K562 (cell line): ENCODE measurements at regions of chr6 and their contacts with region 1.

Region 1: GRCh38 chr6:36423101-36423824 is 19.4 kb downstream of the PXT1 start:
- DNase-seq: peak; percentile 99 to 100 (median 100)
- ATAC-seq: peak; percentile 96
- H3K4me3 ChIP-seq: peak overlapping the region; percentile 32
- H3K27ac ChIP-seq: peak overlapping the region; percentile 75
- H3K4me1 ChIP-seq: peaks cover 13 to 15% of the 10 kb centered on the region in 2 experiments; a peak in 4 of 5 replicates
- H3K27me3 ChIP-seq: no peaks in the 10 kb centered on the region
- CTCF ChIP-seq: peak; percentile 90 to 95 (median 94)
- EP300 ChIP-seq: peak; percentile 49
- POLR2A ChIP-seq: peak; percentile 90
- RAD21 ChIP-seq: peak; percentile 96 to 98

Region 2: GRCh38 chr6:36478051-36478526 is 54.8 kb after region 1 on chr6:
- CTCF ChIA-PET with region 1: no interaction called
- POLR2A ChIA-PET with region 1: interaction called, 4 read pairs
- in situ Hi-C with region 1: no loop called
- intact Hi-C with region 1: loop called (anchors 1 kb)
- DNase-seq: peak; percentile 75 to 92 (median 80)
- ATAC-seq: peak; percentile 94
- H3K4me3 ChIP-seq: peak overlapping the region; percentile 3; the same call in 1 of the 2 replicates
- H3K27ac ChIP-seq: peak overlapping the region; percentile 24; the same call in 2 of the 3 replicates
- H3K4me1 ChIP-seq: peaks cover 12 to 15% of the 10 kb centered on the region in 2 experiments
- H3K27me3 ChIP-seq: no peaks in the 10 kb centered on the region
- CTCF ChIP-seq: no peak
- EP300 ChIP-seq: peak; percentile 92
- POLR2A ChIP-seq: no peak
- RAD21 ChIP-seq: no peak

Region 3: GRCh38 chr6:36546920-36547645 is 123.8 kb after region 1 on chr6 and contains the start of gene STK38:
- CTCF ChIA-PET with region 1: no interaction called
- POLR2A ChIA-PET with region 1: no interaction called
- in situ Hi-C with region 1: no loop called
- intact Hi-C with region 1: loop called (anchors 2 kb)
- DNase-seq: peak; percentile 96 to 100 (median 100)
- ATAC-seq: peak; percentile 93
- H3K4me3 ChIP-seq: peak within 1 kb of the TSS; percentile 92
- H3K27ac ChIP-seq: peak within 1 kb of the TSS; percentile 90
- H3K4me1 ChIP-seq: peaks cover 23 to 24% of the 10 kb centered on the region in 2 experiments
- H3K27me3 ChIP-seq: no peaks in the 10 kb centered on the region
- CTCF ChIP-seq: peak; percentile 4 to 36 (median 14); a peak in 2 of 6 replicates
- EP300 ChIP-seq: 0 out of 2 replicates have a peak, but pooled peaks have one; percentile 18
- POLR2A ChIP-seq: peak; percentile 97
- RAD21 ChIP-seq: peak; percentile 1 to 16; a peak in 1 of 4 replicates
- polyA plus RNA-seq, gene STK38: 5.7 to 8.8 TPM

Region 4: DNA sequence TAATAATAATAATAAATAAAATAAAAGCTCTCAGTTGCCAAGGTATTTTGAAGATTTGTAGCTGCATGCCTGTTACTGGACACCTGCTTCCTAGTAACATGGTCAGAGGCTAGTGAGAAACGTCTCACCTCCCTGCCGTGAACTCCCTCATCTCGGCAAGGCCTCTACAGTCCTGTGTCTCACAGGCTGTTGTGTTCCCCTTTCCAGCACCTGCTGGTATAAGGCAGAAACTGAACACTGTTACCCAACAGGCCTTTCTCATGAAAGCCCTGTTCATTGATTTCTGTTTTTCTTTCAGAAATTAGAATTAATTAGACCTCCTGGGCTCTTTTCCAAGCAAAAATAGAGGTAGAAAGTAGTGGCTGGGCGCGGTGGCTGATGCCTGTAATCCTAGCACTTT is 153.3 kb after region 1 on chr6:
- CTCF ChIA-PET with region 1: interaction called, 13 read pairs
- POLR2A ChIA-PET with region 1: interaction called, 3 read pairs
- in situ Hi-C with region 1: no loop called
- intact Hi-C with region 1: no loop called
- DNase-seq: no peak
- ATAC-seq: no peak
- H3K4me3 ChIP-seq: no peak overlapping the region
- H3K27ac ChIP-seq: no peak overlapping the region
- H3K4me1 ChIP-seq: peaks cover 16 to 21% of the 10 kb centered on the region in 2 experiments; a peak in 3 of 5 replicates
- H3K27me3 ChIP-seq: no peaks in the 10 kb centered on the region
- CTCF ChIP-seq: no peak
- EP300 ChIP-seq: no peak
- POLR2A ChIP-seq: no peak
- RAD21 ChIP-seq: no peak